ENCODE measurements at regions of chr6 and their contacts with region 1.

Region 1: GRCh38 chr6:122839477-122839876 is 50.4 kb downstream of the SMPDL3A start:
- ATAC-seq: peak in 7 of 8 experiments; percentile 40 to 91 (median 84)
- H3K4me3 ChIP-seq: no peak overlapping the region
- H3K27ac ChIP-seq: no peak overlapping the region
- H3K4me1 ChIP-seq: no peaks in the 10 kb centered on the region

Region 2: GRCh38 chr6:122491919-122492555 is 347.4 kb before region 1 on chr6:
- in situ Hi-C with region 1: loop called in 1 of 9 experiments (anchors 25 kb)
- ATAC-seq: peak; percentile 92 to 100 (median 98)
- H3K4me3 ChIP-seq: no peak overlapping the region
- H3K27ac ChIP-seq: no peak overlapping the region
- H3K4me1 ChIP-seq: peaks cover 0 to 3% of the 10 kb centered on the region in 2 donors

Region 3: GRCh38 chr6:122730775-122731386 is 108.6 kb before region 1 on chr6:
- in situ Hi-C with region 1: loop called in 6 of 9 experiments (anchors 10 to 25 kb)
- ATAC-seq: peak in 6 of 8 experiments; percentile 15 to 55 (median 29)
- H3K4me3 ChIP-seq: no peak overlapping the region
- H3K27ac ChIP-seq: no peak overlapping the region
- H3K4me1 ChIP-seq: peaks cover 5 to 15% of the 10 kb centered on the region in 2 donors

Region 4: DNA sequence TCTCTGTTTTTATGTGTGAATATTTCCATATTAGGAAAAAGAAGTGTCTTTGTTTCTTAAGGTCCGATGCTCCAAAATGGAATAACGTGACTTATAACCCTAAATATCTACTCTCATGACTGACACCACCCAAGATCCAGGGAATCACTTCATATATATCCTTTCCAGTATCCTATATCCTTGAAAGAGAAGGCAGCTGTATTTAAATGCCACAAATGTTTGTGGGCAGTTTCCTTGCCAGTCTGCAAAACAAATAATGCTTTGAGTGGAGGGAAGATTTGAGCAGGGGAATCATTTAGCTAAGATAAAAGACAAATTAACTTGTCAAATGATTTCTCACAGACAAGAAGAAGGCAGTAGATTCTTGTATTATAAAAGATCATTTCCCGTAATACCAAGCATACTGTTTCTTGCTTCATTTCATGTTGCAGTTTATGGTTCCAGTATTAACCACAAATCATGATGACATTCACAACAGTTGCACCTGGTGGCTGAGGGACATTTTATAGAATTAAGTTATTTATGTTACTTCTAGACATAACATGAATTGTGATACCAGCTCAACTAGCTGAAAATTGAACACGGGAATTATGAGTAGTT is 89.9 kb before region 1 on chr6:
- in situ Hi-C with region 1: loop called in 6 of 9 experiments (anchors 5 to 25 kb)
- ATAC-seq: peak in 1 of 8 experiments; percentile 17
- H3K4me3 ChIP-seq: no peak overlapping the region
- H3K27ac ChIP-seq: no peak overlapping the region
- H3K4me1 ChIP-seq: no peaks in the 10 kb centered on the region